Activated CD4-positive, alpha-beta T cell treated with anti-CD3 and anti-CD28 coated beads, Interleukin-2, amount 10 ng/mL, durations not matched to agents 24 days and 14 days (primary cell): ENCODE measurements at regions of chr15 and their contacts with region 1.

Region 1: DNA sequence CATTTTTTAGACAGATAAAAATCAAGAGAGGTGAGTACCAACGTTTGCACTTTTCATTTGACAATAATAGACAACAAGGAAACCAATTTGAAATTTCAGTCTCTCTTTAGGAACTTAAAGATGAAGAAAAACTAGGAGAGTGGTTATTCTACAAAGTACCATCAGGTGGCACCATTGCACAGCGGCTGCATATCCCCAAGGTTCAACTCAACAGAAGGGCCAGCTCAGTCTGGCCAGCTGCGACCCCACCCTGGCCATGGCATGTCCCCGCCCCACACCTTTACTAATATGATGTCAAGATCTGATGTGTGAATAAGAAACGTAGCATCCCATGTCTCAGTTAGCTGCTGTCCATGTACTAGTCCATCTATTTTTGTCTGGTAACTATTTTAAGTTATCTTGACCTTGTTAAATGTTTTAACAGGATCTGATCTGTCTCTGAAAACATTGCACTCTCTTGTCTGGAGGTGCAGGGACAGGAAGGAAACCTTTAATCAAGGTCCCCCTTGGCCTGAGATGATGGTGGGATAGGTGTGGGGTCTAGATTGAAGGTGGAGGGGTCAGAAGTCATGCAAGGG is 35.5 kb upstream of the CGNL1 start:
- DNase-seq: peak; percentile 71
- H3K4me3 Mint-ChIP-seq: no peak overlapping the region
- H3K27ac Mint-ChIP-seq: no peak overlapping the region
- H3K4me1 Mint-ChIP-seq: no peaks in the 10 kb centered on the region
- H3K27me3 Mint-ChIP-seq: peaks cover 2% of the 10 kb centered on the region

Region 2: GRCh38 chr15:57079931-57080620 is 260.7 kb before region 1 on chr15:
- intact Hi-C with region 1: no loop called
- DNase-seq: no peak
- H3K4me3 Mint-ChIP-seq: no peak overlapping the region
- H3K27ac Mint-ChIP-seq: no peak overlapping the region
- H3K4me1 Mint-ChIP-seq: peaks cover 8% of the 10 kb centered on the region
- H3K27me3 Mint-ChIP-seq: no peaks in the 10 kb centered on the region

Region 3: DNA sequence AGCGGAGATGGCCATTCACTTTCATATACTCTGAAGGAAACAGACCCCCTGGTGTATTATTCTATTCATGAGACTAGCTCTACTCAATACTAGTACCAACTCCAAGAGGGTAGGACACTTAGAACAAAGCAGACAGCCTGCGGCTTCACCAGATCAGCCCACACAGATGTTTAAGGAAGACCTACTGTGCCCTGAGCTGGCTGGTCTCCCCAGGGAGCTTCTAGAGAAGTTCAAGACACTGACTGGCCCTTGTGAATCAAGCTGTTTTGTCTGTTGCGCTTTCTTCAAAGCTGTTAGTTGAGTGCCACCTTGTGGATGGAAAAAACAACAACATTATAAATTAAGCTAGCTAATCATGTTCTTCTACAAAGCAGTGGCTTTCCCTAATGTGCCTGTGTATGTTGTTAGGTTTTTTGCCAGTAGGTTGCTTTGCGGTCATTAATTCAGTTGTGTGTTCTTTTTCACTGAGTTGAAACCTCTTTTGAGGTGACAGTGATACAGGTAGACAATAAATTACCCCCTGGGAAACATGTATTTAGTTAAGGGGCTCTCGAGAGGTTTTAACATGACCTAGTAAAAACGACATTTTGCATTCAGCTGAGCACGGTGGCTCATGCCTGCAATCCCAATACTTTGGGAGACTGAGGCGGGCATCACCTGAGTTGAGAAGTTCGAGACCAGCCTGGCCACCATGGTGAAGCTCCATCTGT is 186.8 kb after region 1 on chr15:
- intact Hi-C with region 1: loop called (anchors 1 kb)
- DNase-seq: peak; percentile 68
- H3K4me3 Mint-ChIP-seq: no peak overlapping the region
- H3K27ac Mint-ChIP-seq: no peak overlapping the region
- H3K4me1 Mint-ChIP-seq: no peaks in the 10 kb centered on the region
- H3K27me3 Mint-ChIP-seq: peaks cover 18% of the 10 kb centered on the region

Region 4: DNA sequence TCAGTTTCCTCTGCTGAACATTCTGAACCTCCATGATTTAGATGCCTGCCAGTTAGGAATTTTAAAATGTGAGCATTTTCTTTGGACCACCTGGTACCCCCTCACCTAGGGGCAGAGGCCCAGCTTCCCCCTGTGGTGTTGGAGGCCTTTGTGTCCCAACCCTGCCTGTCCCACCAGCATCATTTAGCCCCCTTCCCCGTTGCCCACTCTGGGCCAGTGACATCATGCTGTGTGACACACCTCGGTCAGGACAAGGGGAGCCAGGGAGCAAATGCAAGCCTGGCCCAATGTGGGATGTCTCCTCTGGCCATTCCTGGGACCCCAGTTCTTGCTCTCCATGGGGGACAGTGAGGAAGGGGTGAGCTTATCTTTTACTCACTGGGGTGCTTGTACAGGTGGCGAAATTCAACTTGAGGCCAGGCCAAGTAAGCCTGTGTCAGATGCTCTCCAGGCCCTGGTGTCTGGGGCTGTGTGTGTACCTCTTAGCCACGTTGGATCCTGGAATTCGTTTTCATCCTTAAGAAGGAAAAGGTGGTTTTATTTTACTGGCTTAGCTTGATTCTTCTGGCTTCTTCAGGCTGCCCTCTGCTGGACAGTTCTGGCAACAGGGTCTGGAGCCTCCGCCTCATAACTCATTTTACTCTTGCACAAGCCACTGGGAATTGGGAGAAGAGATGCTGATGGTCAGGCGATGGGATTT is 201.2 kb after region 1 on chr15:
- intact Hi-C with region 1: loop called (anchors 5 kb)
- DNase-seq: peak; percentile 75
- H3K4me3 Mint-ChIP-seq: no peak overlapping the region
- H3K27ac Mint-ChIP-seq: no peak overlapping the region
- H3K4me1 Mint-ChIP-seq: peaks cover 3% of the 10 kb centered on the region
- H3K27me3 Mint-ChIP-seq: peaks cover 2% of the 10 kb centered on the region